Activated B cell treated with CpG ODN at 0.5 μM for 24 hours (primary cell): ENCODE measurements at regions of chr7 and their contacts with region 1.

Region 1: DNA sequence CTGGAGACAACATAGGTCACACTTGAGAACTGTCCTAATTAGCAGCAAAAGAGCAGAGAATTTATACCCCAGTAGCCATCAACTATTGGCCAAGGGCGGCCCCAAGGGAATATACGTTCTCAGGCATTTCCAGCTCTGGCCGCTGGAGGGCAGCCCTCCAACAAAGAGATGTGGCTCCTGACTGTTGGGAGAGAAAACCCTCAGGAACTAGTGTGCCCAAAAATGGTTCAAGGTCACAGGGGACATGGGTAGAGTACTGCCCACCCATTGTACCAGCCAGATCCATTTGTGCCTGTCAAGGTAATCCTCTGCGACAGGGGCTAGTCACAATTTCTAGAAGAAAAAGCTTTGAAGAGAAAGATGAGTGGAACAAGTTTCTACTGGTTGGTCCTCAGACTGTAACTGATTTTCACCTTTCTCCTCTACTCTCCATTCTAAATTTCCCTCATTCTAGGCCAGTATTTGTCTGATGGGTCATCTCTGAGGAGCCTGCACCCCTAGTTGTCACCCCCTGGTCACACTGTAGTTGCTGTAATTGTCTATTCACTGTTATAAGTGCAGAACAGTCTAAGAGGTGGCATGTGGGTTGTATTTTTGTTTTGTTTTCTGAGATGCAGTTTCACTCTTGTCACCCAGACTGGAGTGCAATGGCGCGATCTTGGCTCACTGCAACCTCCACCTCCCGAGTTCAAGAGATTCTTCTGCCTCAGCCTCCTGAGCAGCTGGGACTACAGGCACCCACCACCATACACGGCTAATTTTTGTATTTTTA is 14.7 kb upstream of the C7orf33 start:
- DNase-seq: peak; percentile 56
- ATAC-seq: peak; percentile 88
- H3K4me3 Mint-ChIP-seq: no peak overlapping the region
- H3K27ac Mint-ChIP-seq: no peak overlapping the region
- H3K4me1 Mint-ChIP-seq: peaks cover 2% of the 10 kb centered on the region
- H3K27me3 Mint-ChIP-seq: peaks cover 2% of the 10 kb centered on the region
- CTCF ChIP-seq: no peak

Region 2: GRCh38 chr7:147079921-147080420 is 1495.9 kb before region 1 on chr7:
- CTCF ChIA-PET with region 1: no interaction called
- POLR2A ChIA-PET with region 1: no interaction called
- intact Hi-C with region 1: no loop called
- DNase-seq: no peak
- ATAC-seq: no peak
- H3K4me3 Mint-ChIP-seq: no peak overlapping the region
- H3K27ac Mint-ChIP-seq: no peak overlapping the region
- H3K4me1 Mint-ChIP-seq: no peaks in the 10 kb centered on the region
- H3K27me3 Mint-ChIP-seq: no peaks in the 10 kb centered on the region
- CTCF ChIP-seq: no peak

Region 3: DNA sequence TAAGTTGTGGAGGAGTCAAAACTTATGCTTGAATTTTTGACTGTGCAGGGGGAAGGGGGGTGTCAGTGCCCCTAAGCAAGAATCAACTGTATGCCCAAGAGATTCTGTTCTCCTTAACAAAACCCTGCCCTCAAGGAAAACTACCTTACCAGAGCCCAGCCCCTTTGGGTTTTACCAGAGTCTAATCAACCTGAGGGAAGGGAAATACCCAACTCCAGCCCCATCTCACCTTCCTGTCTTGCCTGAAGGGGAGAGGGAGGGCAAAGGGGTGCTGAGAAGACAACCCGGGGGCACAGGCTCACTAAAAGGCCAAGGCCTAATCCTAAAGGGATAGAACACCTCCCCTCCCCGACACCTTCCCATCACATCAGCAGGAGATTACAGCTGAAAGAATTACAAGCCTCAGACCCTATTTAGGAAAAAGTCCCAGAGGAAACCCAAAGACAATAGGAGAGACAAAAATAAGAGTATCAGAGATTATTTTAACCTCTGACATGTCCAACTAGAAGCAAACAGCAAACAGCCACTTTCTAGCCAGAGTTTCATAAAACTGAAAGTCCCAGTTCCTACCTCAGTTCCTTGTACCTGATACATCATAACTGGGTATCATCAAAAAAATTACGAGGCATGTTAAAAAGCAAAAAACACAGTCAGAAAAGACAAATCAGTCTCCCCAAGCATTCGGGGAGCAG is 12.1 kb before region 1 on chr7:
- CTCF ChIA-PET with region 1: interaction called, 21 read pairs
- POLR2A ChIA-PET with region 1: no interaction called
- intact Hi-C with region 1: loop called (anchors 1 kb)
- DNase-seq: no peak
- ATAC-seq: peak; percentile 18
- H3K4me3 Mint-ChIP-seq: peak overlapping the region; percentile 66
- H3K27ac Mint-ChIP-seq: peak overlapping the region; percentile 81
- H3K4me1 Mint-ChIP-seq: peaks cover 18% of the 10 kb centered on the region
- H3K27me3 Mint-ChIP-seq: peaks cover 2% of the 10 kb centered on the region
- CTCF ChIP-seq: no peak

Region 4: GRCh38 chr7:148763622-148764021 is 187.8 kb after region 1 on chr7:
- CTCF ChIA-PET with region 1: no interaction called
- POLR2A ChIA-PET with region 1: no interaction called
- intact Hi-C with region 1: loop called (anchors 10 kb)
- DNase-seq: no peak
- ATAC-seq: no peak
- H3K4me3 Mint-ChIP-seq: no peak overlapping the region
- H3K27ac Mint-ChIP-seq: no peak overlapping the region
- H3K4me1 Mint-ChIP-seq: no peaks in the 10 kb centered on the region
- H3K27me3 Mint-ChIP-seq: no peaks in the 10 kb centered on the region
- CTCF ChIP-seq: no peak